CD8-positive, alpha-beta memory T cell (primary cell): ENCODE measurements at regions of chr12 and their contacts with region 1.

Region 1: DNA sequence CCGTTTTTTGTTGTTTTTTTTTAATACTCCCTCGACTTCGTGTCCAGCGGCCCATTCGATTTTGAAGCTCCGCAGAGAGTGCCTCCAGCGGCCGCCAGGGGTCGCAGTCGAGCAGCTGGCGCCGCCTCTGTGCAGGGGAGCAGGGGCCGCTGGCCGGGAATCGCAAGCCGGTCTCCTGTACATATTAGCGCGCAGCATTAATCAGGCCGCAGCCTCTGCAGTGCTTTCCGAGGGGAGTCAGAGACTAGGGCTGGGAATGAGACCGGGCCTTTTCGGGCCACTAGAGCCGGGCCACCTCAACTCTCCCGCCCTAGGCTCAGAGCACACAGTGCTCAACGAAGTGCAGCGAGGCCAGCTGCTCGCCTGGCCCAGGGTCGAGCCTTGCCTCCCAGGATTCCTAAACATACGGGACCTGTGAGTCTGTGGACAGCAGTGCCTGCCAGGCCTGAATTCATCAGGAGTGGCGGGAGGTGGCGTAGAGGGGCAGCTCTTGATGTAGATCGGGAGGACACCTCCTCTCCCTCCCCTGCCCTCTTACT is 81.8 kb downstream of the EMP1 start:
- DNase-seq: peak; percentile 26 to 64 (median 38)
- H3K4me3 ChIP-seq: no peak overlapping the region
- H3K4me3 Mint-ChIP-seq: peak overlapping the region in 1 of 7 donors; percentile 14
- H3K27ac ChIP-seq: no peak overlapping the region
- H3K27ac Mint-ChIP-seq: peak overlapping the region in 1 of 8 donors; percentile 23
- H3K4me1 ChIP-seq: no peaks in the 10 kb centered on the region
- H3K4me1 Mint-ChIP-seq: peaks cover 2 to 7% (median 6%) of the 10 kb centered on the region in 3 donors
- H3K27me3 ChIP-seq: peaks cover 9% of the 10 kb centered on the region
- H3K27me3 Mint-ChIP-seq: peaks cover 22 to 40% of the 10 kb centered on the region in 2 donors

Region 2: DNA sequence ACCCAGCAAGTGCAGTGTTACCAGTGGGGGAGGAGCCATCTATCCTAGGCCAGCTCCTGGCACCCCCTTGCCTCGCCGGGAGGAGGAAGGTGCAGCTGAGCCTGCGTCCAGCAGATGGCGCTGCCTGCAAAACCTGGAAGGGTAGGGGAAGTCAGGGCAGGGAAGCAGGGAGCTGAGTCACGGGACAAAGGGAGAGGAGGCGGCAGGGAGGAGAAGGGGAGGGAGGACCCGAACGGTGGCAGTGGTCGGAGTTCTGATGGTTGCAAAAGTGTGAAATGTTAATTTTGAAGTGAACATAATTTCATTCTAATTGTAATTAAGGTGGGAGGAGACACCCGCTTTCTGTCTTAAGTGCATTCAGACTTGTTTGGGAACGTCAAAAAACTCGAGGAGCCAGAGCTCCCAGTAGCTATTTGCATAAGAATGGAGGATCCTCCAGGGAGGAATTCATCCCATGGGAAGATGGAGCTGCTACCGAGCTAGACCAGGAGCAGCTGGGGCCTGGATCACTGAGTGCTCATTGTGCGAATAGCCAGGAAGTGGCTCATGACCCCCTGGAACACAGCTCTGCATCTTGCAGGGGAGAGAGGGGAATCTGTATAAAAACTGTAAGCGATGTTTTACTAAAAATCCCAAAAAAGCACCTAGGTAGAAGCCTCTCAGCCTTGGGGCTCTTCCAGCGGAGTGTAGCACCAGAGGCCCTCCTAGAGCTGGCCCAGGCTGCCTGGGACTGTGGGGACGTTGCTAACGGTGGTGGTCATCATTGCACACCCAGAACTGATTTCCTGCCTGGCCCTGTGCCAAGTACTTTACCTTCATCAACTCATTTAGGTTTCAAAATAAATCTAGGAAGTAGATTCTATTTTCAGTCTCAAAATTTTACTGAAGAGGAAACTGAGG is 22.3 kb before region 1 on chr12:
- CTCF ChIA-PET with region 1: interaction called, 10 read pairs
- POLR2A ChIA-PET with region 1: no interaction called
- DNase-seq: peak; percentile 46 to 75 (median 49)
- H3K4me3 ChIP-seq: no peak overlapping the region
- H3K4me3 Mint-ChIP-seq: no peak overlapping the region
- H3K27ac ChIP-seq: no peak overlapping the region
- H3K27ac Mint-ChIP-seq: no peak overlapping the region
- H3K4me1 ChIP-seq: peaks cover 6% of the 10 kb centered on the region
- H3K4me1 Mint-ChIP-seq: peaks cover 4 to 5% (median 4%) of the 10 kb centered on the region in 3 donors
- H3K27me3 ChIP-seq: no peaks in the 10 kb centered on the region
- H3K27me3 Mint-ChIP-seq: peaks cover 1 to 20% of the 10 kb centered on the region in 2 donors